AG04449 (cell line): ENCODE measurements at regions of chr12 and their contacts with region 1.

Region 1: DNA sequence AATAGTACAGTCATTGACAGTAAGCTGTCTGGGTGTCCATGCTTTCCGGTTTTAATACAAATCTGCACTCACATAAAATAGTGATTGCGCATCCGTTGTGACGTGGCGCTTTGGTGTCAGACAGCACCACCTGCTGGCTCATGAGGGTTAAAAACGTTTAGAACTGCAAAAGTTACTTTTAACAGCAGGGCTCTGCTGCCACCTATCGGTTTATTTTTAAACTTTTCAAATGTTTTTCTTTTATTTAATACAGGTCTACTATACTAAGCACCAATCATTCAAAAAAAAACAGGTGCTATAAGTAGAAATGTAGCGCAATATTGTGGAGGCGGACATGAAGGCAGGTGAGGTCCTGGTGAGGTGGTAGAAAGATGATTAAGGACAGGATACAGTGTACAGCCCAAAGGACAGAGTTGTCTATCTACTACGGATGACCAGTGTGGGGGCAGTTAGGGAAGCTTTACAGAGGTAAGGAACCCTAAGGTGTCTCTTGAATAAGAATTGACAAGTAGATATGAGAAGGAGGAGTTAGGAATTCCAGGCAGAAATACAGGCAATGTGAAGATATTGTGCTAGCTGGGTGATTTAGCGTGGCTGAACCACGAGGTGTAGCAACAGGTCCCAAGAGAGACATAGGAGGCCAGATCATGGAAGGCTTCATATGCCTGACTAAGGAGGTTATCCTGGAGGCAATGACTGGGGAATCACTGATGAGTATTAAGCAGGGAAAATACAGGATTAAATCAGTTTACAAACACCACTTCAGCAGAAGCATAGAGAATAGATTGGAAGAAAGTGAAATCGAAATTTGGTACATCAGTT is 91.5 kb upstream of the PRB2 start:
- DNase-seq: peak; percentile 40
- H3K4me3 ChIP-seq: no peak overlapping the region
- CTCF ChIP-seq: peak; percentile 81

Region 2: DNA sequence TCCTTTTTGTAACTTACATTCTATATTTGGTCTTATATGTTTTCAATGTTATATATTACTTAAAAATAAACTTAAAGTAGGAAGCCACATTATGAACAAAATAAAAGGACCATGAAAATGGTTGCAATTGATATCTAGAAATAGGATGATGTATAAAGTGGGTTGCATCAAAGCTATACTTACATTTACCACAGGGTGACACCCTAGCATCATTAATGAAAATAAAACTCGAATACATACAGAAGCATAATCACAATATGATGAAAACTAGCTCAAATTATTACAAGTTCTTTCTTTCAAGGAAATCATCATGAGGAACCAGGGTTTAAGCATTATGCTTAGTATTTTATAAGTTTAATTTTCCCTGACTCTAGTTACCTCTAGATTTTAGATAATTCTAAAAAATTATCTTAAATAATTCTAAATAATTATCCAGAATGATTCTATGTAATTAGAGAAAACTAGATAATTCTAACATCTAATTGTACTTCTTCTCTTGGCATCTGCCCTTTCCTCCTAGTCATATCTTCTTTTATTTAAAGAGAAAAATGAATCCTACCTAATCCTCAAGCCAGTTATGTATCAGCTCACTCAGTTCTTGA is 715.6 kb before region 1 on chr12:
- CTCF ChIA-PET with region 1: interaction called, 152 read pairs
- POLR2A ChIA-PET with region 1: no interaction called
- DNase-seq: no peak
- H3K4me3 ChIP-seq: no peak overlapping the region
- CTCF ChIP-seq: peak; percentile 44

Region 3: DNA sequence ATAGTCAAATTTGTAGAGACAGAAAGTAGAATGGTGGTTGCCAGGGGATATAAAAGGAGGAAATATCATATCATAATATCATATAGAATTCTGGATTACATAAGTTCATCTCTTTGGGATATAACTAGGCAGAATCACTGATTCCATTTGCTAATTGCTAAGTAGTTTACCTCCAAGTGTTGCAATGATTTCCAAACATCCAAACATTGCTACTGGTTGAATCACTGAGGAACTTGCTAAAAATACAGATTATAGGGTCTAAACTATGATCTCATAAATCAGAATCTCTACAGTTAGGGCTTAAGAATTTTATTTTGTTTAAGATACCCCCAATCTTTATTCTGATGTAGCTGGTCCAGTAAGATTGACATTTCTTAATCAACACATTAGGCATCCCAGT is 284.0 kb before region 1 on chr12:
- CTCF ChIA-PET with region 1: interaction called, 20 read pairs
- POLR2A ChIA-PET with region 1: no interaction called
- DNase-seq: no peak
- H3K4me3 ChIP-seq: no peak overlapping the region
- CTCF ChIP-seq: no peak

Region 4: GRCh38 chr12:11228296-11228879 is 258.4 kb before region 1 on chr12:
- CTCF ChIA-PET with region 1: interaction called, 72 read pairs
- POLR2A ChIA-PET with region 1: no interaction called
- DNase-seq: no peak
- H3K4me3 ChIP-seq: no peak overlapping the region
- CTCF ChIP-seq: peak; percentile 67

Region 5: DNA sequence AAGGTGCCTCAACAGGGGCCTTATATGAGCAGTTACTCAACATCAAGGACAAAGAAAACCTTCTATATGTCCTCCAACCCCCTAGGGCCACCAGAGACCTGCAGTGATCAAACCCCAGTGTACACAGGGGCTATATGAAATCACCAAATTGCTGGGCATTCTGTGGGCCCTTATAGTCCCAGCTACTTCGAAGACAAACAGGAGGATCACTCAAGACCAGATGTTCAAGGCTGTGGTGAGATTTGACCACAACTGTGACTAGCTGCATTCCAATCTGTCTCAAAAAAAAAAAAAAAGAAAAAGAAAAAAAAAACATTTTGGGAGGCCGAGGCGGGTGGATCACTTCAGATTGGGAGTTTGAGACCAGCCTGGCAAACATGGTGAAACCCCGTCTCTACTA is 40.5 kb before region 1 on chr12:
- CTCF ChIA-PET with region 1: no interaction called
- POLR2A ChIA-PET with region 1: no interaction called
- DNase-seq: no peak
- H3K4me3 ChIP-seq: no peak overlapping the region
- CTCF ChIP-seq: no peak

Region 6: DNA sequence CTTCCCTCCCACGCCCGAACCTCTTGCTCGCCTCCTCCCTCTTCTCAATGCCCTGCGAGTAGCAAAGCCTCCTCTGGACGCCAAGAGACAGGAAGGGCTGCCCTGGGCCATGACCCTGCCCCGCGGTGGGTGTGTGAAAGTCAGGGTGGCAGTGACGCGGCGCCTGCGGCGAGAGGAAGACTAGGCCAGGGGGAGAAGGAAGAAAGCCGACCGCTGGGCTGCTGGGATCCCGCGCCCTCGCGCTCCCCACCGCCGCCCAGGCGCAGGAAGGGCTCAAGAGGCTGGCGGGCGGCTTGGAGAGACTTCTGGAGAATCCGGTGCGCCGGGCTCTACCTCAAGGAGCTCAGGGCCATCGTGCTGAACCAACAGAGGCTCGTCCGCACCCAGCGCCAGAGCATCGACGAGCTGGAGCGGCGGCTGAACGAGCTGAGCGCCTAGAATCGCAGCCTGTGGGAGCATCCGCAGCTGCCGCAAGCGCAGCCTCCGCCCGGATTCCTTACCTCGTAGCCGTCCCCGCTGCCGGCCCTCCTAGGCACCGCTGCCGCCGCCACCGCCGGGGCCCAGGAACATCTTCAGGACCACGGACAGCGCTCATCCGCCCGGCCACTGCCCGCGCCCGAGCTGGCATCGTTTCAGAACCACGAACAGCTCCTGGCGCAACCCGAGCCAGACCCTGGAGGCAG is 13.5 kb after region 1 on chr12:
- CTCF ChIA-PET with region 1: interaction called, 17 read pairs
- POLR2A ChIA-PET with region 1: no interaction called
- DNase-seq: no peak
- H3K4me3 ChIP-seq: no peak overlapping the region
- CTCF ChIP-seq: no peak

Region 7: GRCh38 chr12:11607313-11608081 is 120.7 kb after region 1 on chr12:
- CTCF ChIA-PET with region 1: no interaction called
- POLR2A ChIA-PET with region 1: no interaction called
- DNase-seq: peak; percentile 34
- H3K4me3 ChIP-seq: no peak overlapping the region
- CTCF ChIP-seq: no peak